ENCODE measurements at regions of chr11 and their contacts with region 1.

Region 1: DNA sequence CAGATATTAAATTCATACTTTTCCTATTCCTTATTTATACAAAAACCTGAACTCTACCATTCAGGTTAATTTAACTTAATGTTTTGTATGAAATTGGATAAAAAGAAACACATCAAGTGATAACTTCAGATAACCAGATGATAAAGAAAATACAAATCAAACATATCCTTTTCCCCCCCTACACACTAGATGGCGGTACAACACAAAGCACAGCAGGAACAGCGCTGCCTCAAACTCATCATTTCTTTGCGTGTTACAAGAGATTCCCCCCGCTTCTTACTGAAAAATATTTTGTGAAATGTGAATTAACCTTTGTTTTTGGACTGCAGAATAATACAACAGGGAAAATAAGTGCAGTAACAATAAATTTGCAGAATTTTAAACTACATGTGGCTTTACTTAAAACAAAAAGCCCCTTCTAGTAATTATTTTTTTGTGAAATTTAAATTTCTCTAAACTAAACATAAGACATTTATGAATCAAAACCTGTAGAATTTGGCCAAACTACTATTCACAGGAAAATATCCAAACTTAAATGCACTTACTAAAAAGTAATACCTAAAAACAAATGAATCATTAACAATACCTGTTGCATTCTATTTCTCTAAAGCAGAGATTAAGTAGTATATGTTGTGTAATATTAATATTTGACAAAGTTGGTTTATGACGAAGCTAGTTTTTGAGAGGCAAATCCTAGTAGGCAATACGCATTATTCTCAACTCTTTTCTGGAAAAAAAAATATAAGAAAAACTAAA is 74.4 kb downstream of the ARHGAP32 start:
- DNase-seq: no peak
- H3K4me3 ChIP-seq: no peak overlapping the region
- H3K27ac ChIP-seq: no peak overlapping the region
- H3K4me1 ChIP-seq: no peaks in the 10 kb centered on the region
- H3K27me3 ChIP-seq: no peaks in the 10 kb centered on the region
- CTCF ChIP-seq: peak; percentile 71 to 80 (median 78)
- POLR2A ChIP-seq: no peak

Region 2: GRCh38 chr11:129331871-129332274 is 214.1 kb after region 1 on chr11:
- intact Hi-C with region 1: loop called (anchors 5 kb)
- DNase-seq: no peak
- H3K4me3 ChIP-seq: no peak overlapping the region
- H3K27ac ChIP-seq: no peak overlapping the region
- H3K4me1 ChIP-seq: no peaks in the 10 kb centered on the region
- H3K27me3 ChIP-seq: no peaks in the 10 kb centered on the region
- CTCF ChIP-seq: peak; percentile 49 to 91 (median 82)
- POLR2A ChIP-seq: no peak